Left ventricle myocardium inferior (tissue), 1 donor: ENCODE measurements at regions of chr6 and their contacts with region 1.

Region 1: DNA sequence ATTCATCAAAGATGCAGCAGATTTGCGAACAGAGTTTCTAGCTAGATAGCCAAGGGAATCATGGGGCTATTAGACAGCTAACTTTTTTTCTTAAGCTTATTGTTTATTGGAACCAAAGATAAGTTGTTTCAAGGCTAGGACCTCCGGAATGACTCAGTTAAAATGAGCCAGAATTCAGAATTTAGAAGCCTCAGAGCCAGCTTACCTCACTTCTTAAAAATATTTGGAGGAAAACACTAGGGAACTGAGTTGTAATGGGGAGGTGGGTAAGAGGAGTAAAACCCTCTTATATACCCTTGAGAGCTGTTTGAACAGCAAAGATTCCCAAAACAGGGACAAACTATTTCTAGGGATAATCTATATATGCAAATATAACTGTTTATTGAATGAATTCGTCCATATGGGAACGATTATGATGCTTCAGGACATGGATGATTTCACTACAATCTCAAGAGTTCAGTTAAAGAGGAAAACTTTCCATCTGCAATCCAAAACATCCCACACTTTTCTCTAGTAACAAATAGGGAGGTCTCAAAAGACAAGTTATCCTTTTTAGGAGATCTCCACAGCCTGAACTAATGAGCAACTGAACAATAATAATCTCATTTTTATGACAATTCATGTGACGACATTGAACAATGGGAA is 12.6 kb upstream of the CARMIL1 start:
- DNase-seq: no peak
- H3K4me3 ChIP-seq: no peak overlapping the region
- H3K27ac ChIP-seq: peak overlapping the region; percentile 12
- H3K4me1 ChIP-seq: peaks cover 3% of the 10 kb centered on the region
- H3K27me3 ChIP-seq: peaks cover 6% of the 10 kb centered on the region
- CTCF ChIP-seq: no peak

Region 2: DNA sequence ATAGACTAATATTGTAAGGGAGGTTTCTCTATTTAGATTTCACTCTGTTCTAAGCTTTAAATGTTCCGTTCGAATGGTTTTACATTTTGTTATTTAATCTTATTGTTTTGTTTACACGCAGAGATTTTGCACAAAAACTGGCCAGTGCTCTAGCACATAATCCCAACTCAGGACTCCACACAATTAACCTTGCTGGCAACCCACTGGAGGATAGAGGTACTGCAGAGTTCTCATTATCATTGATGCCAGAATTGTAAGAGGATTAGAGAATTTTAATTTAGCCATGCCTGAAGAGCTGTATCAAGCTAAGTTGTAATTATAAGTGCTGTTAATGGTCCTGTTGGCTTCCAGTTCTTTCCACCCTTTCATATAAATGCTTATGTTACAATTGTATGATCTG is 205.7 kb after region 1 on chr6:
- intact Hi-C with region 1: no loop called
- DNase-seq: no peak
- H3K4me3 ChIP-seq: no peak overlapping the region
- H3K27ac ChIP-seq: no peak overlapping the region
- H3K4me1 ChIP-seq: no peaks in the 10 kb centered on the region
- H3K27me3 ChIP-seq: no peaks in the 10 kb centered on the region
- CTCF ChIP-seq: peak; percentile 31

Region 3: GRCh38 chr6:25556516-25556915 is 289.9 kb after region 1 on chr6:
- intact Hi-C with region 1: loop called (anchors 5 kb)
- DNase-seq: peak; percentile 70
- H3K4me3 ChIP-seq: no peak overlapping the region
- H3K27ac ChIP-seq: no peak overlapping the region
- H3K4me1 ChIP-seq: no peaks in the 10 kb centered on the region
- H3K27me3 ChIP-seq: peaks cover 11% of the 10 kb centered on the region
- CTCF ChIP-seq: peak; percentile 83